SK-N-SH (cell line): ENCODE measurements at regions of chr16 and their contacts with region 1.

Region 1: GRCh38 chr16:87636072-87636684 is 33.9 kb downstream of the JPH3 start:
- DNase-seq: peak; percentile 93
- H3K4me3 ChIP-seq: peak overlapping the region; percentile 35 to 50; a peak in 2 of 4 replicates
- H3K27ac ChIP-seq: no peak overlapping the region
- H3K4me1 ChIP-seq: peaks cover 0 to 15% of the 10 kb centered on the region in 2 experiments; a peak in 1 of 4 replicates
- H3K27me3 ChIP-seq: peaks cover 16% of the 10 kb centered on the region; the same call in 1 of the 2 replicates
- CTCF ChIP-seq: peak; percentile 67
- EP300 ChIP-seq: no peak
- RAD21 ChIP-seq: peak; percentile 83

Region 2: GRCh38 chr16:87416826-87417527 is 219.2 kb before region 1 on chr16:
- CTCF ChIA-PET with region 1: interaction called, 53 read pairs
- POLR2A ChIA-PET with region 1: no interaction called
- DNase-seq: peak; percentile 73
- H3K4me3 ChIP-seq: no peak overlapping the region
- H3K27ac ChIP-seq: no peak overlapping the region; a peak in 1 of 4 replicates
- H3K4me1 ChIP-seq: peaks cover 0 to 3% of the 10 kb centered on the region in 2 experiments; a peak in 1 of 4 replicates
- H3K27me3 ChIP-seq: no peaks in the 10 kb centered on the region
- CTCF ChIP-seq: peak; percentile 94
- EP300 ChIP-seq: no peak
- RAD21 ChIP-seq: peak; percentile 85

Region 3: DNA sequence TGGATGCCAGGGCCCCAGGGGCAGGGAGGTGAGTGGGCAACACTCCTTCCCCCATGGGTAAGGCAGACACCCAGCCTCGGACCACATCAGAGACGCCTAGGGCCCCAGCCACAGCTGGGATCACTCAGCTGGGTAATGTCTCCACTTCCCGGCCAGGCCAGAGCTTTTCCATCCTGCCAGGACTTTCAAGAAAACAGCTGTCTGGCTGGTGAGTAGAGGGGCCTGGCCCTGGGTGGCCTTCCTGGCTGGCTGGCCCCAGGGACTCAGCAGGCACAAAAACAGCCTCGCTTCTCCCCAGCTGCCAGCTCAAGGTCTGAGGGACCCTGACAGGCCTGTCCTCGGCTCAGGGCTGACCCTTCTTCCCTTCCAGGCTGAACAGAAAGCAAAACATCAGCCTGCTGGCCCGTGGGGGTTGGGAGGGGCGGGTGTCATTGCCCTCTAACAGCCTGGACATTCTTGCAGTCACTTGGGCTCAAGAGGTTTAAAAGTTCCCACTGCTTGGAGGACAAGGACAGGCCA is 79.2 kb before region 1 on chr16:
- CTCF ChIA-PET with region 1: interaction called, 20 read pairs
- POLR2A ChIA-PET with region 1: no interaction called
- DNase-seq: peak; percentile 90
- H3K4me3 ChIP-seq: no peak overlapping the region
- H3K27ac ChIP-seq: peak overlapping the region in 1 of 2 experiments; percentile 90; a peak in 2 of 4 replicates
- H3K4me1 ChIP-seq: peaks cover 0 to 17% of the 10 kb centered on the region in 2 experiments; a peak in 1 of 4 replicates
- H3K27me3 ChIP-seq: no peaks in the 10 kb centered on the region
- CTCF ChIP-seq: no peak
- EP300 ChIP-seq: no peak
- RAD21 ChIP-seq: 0 out of 2 replicates have a peak, but pooled peaks have one; percentile 12

Region 4: DNA sequence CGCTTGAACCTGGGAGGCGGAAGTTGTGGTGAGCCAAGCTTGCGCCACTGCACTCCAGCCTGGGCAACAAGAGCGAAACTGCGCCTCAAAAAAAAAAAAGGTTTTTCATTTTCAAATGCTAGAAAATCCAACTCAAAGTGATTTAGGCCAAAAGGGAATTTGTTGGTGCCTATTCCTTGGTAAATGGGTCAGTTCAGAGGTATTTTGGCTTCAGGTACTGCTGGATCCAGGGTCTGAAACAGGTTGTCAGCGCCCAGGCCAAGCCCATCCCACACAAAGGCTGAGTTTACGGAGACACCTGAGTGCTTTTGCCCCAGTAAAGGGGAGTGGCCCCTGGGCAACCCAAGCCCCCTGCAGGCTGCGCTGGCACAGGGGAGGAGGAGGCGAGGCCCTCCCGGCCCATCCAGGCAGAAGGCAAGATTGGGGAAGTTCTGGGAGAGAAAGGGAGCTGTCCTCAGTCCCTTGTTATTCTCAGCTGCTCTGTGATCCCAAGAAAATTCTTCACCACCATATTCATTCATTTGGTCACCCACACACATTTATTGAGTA is 42.4 kb before region 1 on chr16:
- CTCF ChIA-PET with region 1: interaction called, 229 read pairs
- POLR2A ChIA-PET with region 1: interaction called, 4 read pairs
- DNase-seq: no peak
- H3K4me3 ChIP-seq: no peak overlapping the region
- H3K27ac ChIP-seq: no peak overlapping the region
- H3K4me1 ChIP-seq: peaks cover 0 to 5% of the 10 kb centered on the region in 2 experiments; a peak in 1 of 4 replicates
- H3K27me3 ChIP-seq: peaks cover 32% of the 10 kb centered on the region; the same call in 1 of the 2 replicates
- CTCF ChIP-seq: no peak
- EP300 ChIP-seq: no peak
- RAD21 ChIP-seq: no peak

Region 5: DNA sequence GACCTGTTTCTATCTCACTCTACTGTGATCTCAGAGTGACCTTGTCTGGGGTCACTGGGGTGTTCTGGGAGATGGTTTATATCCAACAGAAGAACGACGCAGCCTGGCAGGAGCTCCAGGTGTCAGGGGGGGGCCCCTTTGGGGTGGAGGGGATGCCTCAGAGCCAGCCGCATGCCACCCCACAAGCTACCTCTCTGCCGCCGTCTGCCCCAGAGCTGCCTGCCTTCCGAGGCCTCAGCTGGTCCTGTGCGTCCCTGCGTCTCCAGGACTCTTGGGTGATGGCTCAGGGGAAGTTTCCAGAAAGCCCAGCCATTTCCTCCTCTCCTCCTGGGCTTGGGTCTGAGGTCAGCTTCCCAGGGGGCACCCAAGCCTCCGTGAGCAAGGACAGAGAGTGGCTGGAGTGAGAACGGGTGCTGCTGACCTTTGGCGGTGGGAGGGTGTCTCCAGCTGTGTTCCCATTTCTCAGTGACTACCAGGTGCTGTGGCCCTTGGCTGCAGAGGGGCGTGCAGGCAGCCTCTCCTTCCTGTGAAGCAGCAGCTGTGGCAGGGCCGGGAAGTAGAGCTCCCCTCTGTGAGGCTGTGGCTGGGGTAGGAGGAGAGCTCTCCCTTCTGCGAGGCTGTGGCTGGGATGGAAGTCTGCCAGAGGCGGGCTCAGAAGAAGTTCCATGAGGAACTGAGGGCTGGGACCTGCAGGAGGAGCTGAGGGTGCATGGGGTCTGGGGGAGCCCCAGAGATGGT is 14.0 kb before region 1 on chr16:
- CTCF ChIA-PET with region 1: interaction called, 81 read pairs
- POLR2A ChIA-PET with region 1: no interaction called
- DNase-seq: no peak
- H3K4me3 ChIP-seq: no peak overlapping the region
- H3K27ac ChIP-seq: no peak overlapping the region
- H3K4me1 ChIP-seq: no peaks in the 10 kb centered on the region
- H3K27me3 ChIP-seq: no peaks in the 10 kb centered on the region; the same call in 1 of the 2 replicates
- CTCF ChIP-seq: no peak
- EP300 ChIP-seq: no peak
- RAD21 ChIP-seq: no peak